Calu3 (cell line): ENCODE measurements at regions of chr1 and their contacts with region 1.

Region 1: DNA sequence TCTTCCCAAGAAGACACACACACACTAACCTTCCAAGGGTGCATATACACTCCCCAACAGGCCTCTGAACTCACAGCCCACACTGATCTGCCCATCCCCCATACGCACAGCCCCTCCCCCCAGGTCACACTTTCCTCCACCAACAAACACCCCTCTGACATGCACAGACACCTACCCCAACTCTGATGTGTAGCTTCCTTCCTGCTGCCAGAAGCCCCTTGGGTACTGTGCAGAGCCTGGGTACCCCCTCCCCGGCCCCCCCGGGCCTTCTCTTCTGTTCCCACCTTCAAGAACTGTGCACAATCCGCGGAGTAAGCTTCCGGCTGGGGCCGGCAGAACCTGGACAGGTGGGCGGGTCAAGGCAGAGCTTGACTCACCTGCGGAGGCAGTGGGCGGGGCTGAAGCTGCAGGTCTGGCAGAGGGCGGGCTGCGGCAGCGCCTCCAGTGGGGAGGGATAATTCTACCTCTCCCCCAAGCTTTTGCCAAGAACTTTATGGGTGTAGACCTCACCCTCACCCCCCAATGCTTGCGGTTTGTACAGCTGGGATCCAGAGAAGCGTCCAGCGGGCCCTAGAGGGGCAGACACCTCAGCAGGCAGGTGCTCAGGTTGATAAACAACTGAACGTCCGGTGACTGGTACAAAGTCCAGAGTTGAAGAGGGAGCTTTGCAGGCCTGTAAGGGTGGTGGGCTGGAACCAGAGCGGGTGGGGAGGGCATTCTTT is at the start of gene C1orf210:
- DNase-seq: peak; percentile 97
- H3K4me3 Mint-ChIP-seq: peak within 1 kb of the TSS; percentile 83
- H3K27ac Mint-ChIP-seq: peak within 1 kb of the TSS; percentile 43
- H3K4me1 Mint-ChIP-seq: peaks cover 28% of the 10 kb centered on the region
- H3K27me3 Mint-ChIP-seq: no peaks in the 10 kb centered on the region
- CTCF ChIP-seq: peak; percentile 67
- total RNA-seq, gene C1orf210: 16.8 and 19.9 TPM in 2 replicates

Region 2: DNA sequence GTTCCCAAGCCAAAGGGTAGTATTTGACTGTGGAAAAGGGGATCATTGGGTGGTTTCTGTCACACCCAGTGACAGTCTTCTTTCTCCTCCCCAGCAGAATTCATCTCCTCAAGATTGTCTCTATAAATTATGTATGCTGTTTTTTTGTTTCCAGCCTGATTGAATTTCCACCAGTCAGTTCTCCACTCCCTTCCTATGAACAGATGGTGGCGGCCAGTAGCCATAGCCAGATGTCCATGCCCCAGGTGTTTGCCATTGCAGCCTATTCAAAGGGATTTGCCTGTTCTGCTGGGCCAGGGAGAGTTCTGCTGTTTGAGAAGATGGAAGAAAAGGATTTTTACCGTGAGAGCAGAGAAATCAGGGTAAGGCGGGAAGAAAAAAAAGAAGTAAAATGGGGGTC is 100.4 kb before region 1 on chr1:
- CTCF ChIA-PET with region 1: no interaction called
- intact Hi-C with region 1: no loop called
- DNase-seq: no peak
- H3K4me3 Mint-ChIP-seq: no peak overlapping the region
- H3K27ac Mint-ChIP-seq: no peak overlapping the region
- H3K4me1 Mint-ChIP-seq: no peaks in the 10 kb centered on the region
- H3K27me3 Mint-ChIP-seq: no peaks in the 10 kb centered on the region
- CTCF ChIP-seq: no peak

Region 3: GRCh38 chr1:43270413-43271095 is 14.9 kb before region 1 on chr1:
- CTCF ChIA-PET with region 1: interaction called, 4 read pairs
- intact Hi-C with region 1: loop called (anchors 2 kb)
- DNase-seq: peak; percentile 87
- H3K4me3 Mint-ChIP-seq: peak overlapping the region; percentile 82
- H3K27ac Mint-ChIP-seq: peak overlapping the region; percentile 92
- H3K4me1 Mint-ChIP-seq: peaks cover 31% of the 10 kb centered on the region
- H3K27me3 Mint-ChIP-seq: no peaks in the 10 kb centered on the region
- CTCF ChIP-seq: no peak

Region 4: GRCh38 chr1:43367904-43368645 is 82.6 kb after region 1 on chr1 and contains the start of gene ELOVL1:
- CTCF ChIA-PET with region 1: interaction called, 14 read pairs
- intact Hi-C with region 1: no loop called
- DNase-seq: peak; percentile 96
- H3K4me3 Mint-ChIP-seq: peak within 1 kb of the TSS; percentile 79
- H3K27ac Mint-ChIP-seq: peak within 1 kb of the TSS; percentile 88
- H3K4me1 Mint-ChIP-seq: peaks cover 39% of the 10 kb centered on the region
- H3K27me3 Mint-ChIP-seq: no peaks in the 10 kb centered on the region
- CTCF ChIP-seq: no peak
- total RNA-seq, gene ELOVL1: 107 and 117 TPM in 2 replicates